K562 (cell line): ENCODE measurements at regions of chr6 and their contacts with region 1.

Region 1: GRCh38 chr6:15409301-15410125 is 163.6 kb downstream of the JARID2 start:
- DNase-seq: peak; percentile 40 to 70 (median 58)
- ATAC-seq: peak; percentile 84
- H3K4me3 ChIP-seq: no peak overlapping the region
- H3K27ac ChIP-seq: no peak overlapping the region
- H3K4me1 ChIP-seq: peaks cover 8 to 50% of the 10 kb centered on the region in 2 experiments
- H3K27me3 ChIP-seq: no peaks in the 10 kb centered on the region
- CTCF ChIP-seq: no peak
- EP300 ChIP-seq: no peak
- POLR2A ChIP-seq: no peak
- RAD21 ChIP-seq: no peak

Region 2: GRCh38 chr6:15420959-15421438 is 11.5 kb after region 1 on chr6:
- CTCF ChIA-PET with region 1: no interaction called
- POLR2A ChIA-PET with region 1: interaction called, 17 read pairs
- in situ Hi-C with region 1: no loop called
- intact Hi-C with region 1: no loop called
- DNase-seq: no peak
- ATAC-seq: no peak
- H3K4me3 ChIP-seq: no peak overlapping the region
- H3K27ac ChIP-seq: no peak overlapping the region
- H3K4me1 ChIP-seq: no peaks in the 10 kb centered on the region
- H3K27me3 ChIP-seq: no peaks in the 10 kb centered on the region
- CTCF ChIP-seq: no peak
- EP300 ChIP-seq: no peak
- POLR2A ChIP-seq: no peak
- RAD21 ChIP-seq: no peak